ENCODE measurements at regions of chr10 and their contacts with region 1.

Region 1: DNA sequence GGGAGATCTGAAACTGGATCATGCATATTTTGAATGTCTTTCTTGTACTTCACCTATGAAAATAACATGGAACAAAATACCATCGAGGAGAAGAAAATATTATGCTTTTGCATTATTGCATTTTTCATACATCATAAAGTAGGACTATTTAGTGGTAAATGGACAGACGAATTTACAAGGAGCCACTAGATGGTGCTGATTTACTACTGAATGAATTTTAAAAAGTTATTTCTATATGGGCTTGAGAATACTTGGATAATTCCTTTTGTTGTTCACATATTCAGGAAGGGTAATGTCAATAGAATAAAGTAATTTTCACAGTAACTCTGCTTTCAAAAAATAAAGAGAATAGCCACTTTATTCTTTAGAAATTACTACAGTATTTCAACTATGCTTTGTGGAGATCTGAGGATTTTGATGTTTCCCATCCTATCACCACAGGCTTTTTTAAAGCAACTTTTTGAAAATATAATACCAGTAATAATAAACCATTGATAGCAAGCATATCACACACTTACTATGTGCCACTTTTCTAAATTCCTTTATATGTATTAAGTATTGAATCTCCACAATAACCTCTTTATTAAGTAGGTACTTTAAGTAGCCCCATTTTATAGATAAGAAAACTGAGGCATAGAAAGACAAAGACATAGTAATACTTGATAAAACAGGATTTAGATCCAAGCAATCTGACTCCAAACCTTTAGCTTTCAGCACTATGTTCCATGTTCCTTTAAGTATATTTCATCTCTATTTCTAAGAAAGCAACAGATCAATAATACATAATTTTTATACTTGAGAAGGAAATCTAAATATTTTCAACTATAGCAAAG is 38.6 kb downstream of the NEBL start:
- DNase-seq: no peak
- ATAC-seq: no peak
- H3K4me3 ChIP-seq: no peak overlapping the region
- H3K27ac ChIP-seq: no peak overlapping the region
- H3K4me1 ChIP-seq: peaks cover 0 to 22% (median 3%) of the 10 kb centered on the region in 12 donors
- H3K27me3 ChIP-seq: no peaks in the 10 kb centered on the region
- CTCF ChIP-seq: peak; percentile 18 to 58 (median 44)
- POLR2A ChIP-seq: no peak

Region 2: GRCh38 chr10:19412531-19412930 is 1446.0 kb before region 1 on chr10:
- intact Hi-C with region 1: loop called in 2 of 10 experiments (anchors 5 to 10 kb)
- DNase-seq: no peak
- ATAC-seq: no peak
- H3K4me3 ChIP-seq: no peak overlapping the region
- H3K27ac ChIP-seq: no peak overlapping the region
- H3K4me1 ChIP-seq: no peaks in the 10 kb centered on the region
- H3K27me3 ChIP-seq: no peaks in the 10 kb centered on the region
- CTCF ChIP-seq: peak in 11 of 12 donors; percentile 11 to 47 (median 35)
- POLR2A ChIP-seq: no peak

Region 3: DNA sequence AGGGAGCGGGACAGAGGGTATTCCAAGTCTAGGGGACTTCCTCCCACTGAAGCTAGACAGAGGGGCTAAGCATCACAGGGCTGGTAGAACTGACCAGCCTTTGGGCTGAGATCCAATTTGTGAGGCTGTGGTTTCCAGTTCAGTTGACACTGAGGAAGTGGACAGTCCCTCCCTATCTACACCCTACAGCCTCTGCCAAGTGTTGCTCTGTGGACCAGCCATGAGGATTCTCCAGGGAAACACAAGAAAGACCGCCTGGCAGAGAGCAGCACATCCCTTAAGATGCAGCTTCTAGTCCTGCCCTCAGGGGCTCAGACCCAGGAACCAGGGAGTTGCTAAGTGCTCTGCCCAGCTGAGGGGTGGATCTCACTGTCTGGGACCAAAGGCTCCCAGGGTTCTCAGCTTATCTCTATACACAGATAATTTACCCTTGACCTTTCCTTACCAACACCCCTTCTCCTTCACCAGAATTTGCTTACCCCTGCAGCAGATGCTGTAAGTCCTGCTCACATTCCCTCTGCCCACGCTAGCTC is 415.0 kb after region 1 on chr10:
- intact Hi-C with region 1: loop called in 5 of 10 experiments (anchors 5 to 10 kb)
- DNase-seq: no peak
- ATAC-seq: peak in 2 of 4 donors; percentile 22 to 35
- H3K4me3 ChIP-seq: no peak overlapping the region
- H3K27ac ChIP-seq: no peak overlapping the region
- H3K4me1 ChIP-seq: peaks cover 0 to under 1% (median 0%) of the 10 kb centered on the region in 12 donors
- H3K27me3 ChIP-seq: no peaks in the 10 kb centered on the region
- CTCF ChIP-seq: no peak
- POLR2A ChIP-seq: no peak

Region 4: GRCh38 chr10:21572578-21572977 is 714.1 kb after region 1 on chr10:
- intact Hi-C with region 1: no loop called
- DNase-seq: peak in 1 of 5 donors; percentile 42
- ATAC-seq: peak in 3 of 4 donors; percentile 52 to 75 (median 72)
- H3K4me3 ChIP-seq: no peak overlapping the region
- H3K27ac ChIP-seq: no peak overlapping the region
- H3K4me1 ChIP-seq: peaks cover 0 to 51% (median 28%) of the 10 kb centered on the region in 12 donors
- H3K27me3 ChIP-seq: no peaks in the 10 kb centered on the region
- CTCF ChIP-seq: no peak
- POLR2A ChIP-seq: no peak